RWPE1 (cell line): ENCODE measurements at regions of chr15 and their contacts with region 1.

Region 1: DNA sequence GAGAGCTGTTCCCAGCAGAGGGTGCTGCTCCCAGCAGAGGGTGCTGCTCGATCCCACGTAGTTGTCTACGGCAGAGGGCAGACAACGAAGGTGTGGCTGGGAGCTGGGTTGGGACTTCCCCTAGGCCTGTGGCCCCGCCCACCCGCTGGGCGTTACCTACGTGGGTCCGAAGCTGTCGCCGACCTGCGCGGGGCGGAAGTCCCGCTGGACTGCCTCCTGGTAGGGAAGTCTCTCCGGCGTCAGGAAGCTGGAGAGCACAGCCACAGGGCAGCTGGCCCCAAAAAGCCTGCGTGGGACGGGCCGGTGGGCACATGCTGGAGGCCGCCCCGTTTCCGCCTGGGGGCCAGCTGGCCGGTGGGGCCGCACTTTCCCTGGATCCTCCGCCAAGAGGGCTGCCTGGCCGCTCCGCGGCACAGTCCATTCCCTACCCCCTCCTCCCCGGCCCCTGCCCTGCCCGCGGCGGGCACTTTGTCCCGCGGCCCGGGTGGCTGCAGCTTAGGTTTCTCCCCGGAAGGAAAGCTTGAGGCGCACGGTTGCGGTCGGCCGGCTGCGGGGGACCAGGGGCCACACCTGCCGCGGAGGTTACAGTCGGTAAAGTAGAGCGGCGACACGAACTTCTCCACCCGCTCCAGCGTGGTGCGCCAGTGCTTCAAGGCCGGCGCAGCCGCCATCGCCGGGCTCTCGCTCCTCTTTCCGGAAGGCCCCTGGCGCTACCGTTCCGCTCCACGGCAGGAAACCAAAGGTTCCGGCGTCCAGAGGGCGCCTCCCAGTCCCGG is at the start of gene MAN2C1:
- DNase-seq: peak; percentile 97
- H3K27ac ChIP-seq: peak within 1 kb of the TSS; percentile 98
- CTCF ChIP-seq: peak; percentile 96

Region 2: GRCh38 chr15:75049392-75049791 is 318.7 kb before region 1 on chr15:
- CTCF ChIA-PET with region 1: no interaction called
- POLR2A ChIA-PET with region 1: no interaction called
- DNase-seq: no peak
- H3K27ac ChIP-seq: no peak overlapping the region
- CTCF ChIP-seq: no peak

Region 3: DNA sequence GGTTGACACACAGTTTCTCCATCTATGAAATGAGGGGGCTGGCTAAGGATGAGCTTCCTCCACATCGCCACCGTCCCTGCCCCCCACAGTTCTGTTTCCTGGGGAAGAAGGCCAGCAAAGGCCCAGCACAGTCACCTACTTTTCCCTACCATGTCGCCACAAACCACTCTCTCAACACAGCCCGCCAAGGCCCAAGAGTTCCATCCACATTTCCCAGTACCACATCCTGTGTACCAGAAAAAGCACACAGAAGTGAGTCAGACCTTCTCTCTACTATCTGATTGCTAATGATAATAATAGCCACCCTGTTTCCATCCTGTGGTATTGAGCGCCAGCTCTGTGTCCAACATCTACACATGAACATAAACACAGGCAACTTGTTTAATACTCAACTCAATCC is 196.7 kb before region 1 on chr15:
- CTCF ChIA-PET with region 1: no interaction called
- POLR2A ChIA-PET with region 1: no interaction called
- DNase-seq: no peak
- H3K27ac ChIP-seq: no peak overlapping the region
- CTCF ChIP-seq: no peak

Region 4: DNA sequence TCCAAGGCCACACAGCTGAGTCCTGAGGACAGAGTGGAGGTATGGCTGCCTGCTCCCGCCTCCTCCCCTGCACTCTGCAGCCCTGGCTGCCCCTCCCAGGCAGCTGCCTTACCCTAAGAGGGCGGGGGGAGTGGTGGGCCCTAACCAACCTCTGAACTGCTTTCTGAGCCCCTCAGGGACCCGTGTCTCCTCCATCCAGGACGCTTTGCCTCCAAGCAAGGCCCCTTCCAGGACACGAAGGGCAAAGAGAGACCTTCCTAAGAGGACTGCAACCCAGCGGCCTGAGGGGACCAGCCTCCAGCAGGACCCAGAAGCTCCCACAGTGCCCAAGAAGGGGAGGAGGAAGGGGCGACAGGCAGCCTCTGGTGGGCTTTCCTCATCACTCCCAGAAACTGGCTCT is 13.6 kb before region 1 on chr15:
- CTCF ChIA-PET with region 1: interaction called, 12 read pairs
- POLR2A ChIA-PET with region 1: no interaction called
- DNase-seq: no peak
- H3K27ac ChIP-seq: peak overlapping the region; percentile 28
- CTCF ChIP-seq: no peak

Region 5: DNA sequence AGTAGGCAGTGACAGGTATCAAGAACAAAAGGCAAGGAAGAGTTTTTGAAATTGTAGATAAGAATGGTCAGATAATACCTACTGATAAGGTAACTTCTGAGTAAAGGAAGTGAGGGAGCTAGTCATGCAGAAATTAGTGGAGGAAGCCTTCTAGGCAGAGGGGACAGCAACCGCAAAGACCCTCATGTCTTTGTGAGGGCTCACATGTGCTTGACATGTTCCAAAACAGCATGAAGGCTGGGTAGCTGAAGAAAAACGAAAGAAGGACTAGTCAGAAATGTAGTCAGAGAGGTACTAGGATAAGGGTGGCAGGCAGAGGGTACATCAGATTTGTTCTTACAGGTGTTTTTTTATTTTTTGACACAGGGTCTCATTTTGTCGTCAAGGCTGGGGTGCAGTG is 78.0 kb after region 1 on chr15:
- CTCF ChIA-PET with region 1: no interaction called
- POLR2A ChIA-PET with region 1: interaction called, 10 read pairs
- DNase-seq: no peak
- H3K27ac ChIP-seq: peak overlapping the region; percentile 8; the same call in 1 of the 2 replicates
- CTCF ChIP-seq: no peak

Region 6: GRCh38 chr15:75483961-75484360 is 115.9 kb after region 1 on chr15:
- CTCF ChIA-PET with region 1: no interaction called
- POLR2A ChIA-PET with region 1: no interaction called
- DNase-seq: no peak
- H3K27ac ChIP-seq: no peak overlapping the region
- CTCF ChIP-seq: no peak

Region 7: DNA sequence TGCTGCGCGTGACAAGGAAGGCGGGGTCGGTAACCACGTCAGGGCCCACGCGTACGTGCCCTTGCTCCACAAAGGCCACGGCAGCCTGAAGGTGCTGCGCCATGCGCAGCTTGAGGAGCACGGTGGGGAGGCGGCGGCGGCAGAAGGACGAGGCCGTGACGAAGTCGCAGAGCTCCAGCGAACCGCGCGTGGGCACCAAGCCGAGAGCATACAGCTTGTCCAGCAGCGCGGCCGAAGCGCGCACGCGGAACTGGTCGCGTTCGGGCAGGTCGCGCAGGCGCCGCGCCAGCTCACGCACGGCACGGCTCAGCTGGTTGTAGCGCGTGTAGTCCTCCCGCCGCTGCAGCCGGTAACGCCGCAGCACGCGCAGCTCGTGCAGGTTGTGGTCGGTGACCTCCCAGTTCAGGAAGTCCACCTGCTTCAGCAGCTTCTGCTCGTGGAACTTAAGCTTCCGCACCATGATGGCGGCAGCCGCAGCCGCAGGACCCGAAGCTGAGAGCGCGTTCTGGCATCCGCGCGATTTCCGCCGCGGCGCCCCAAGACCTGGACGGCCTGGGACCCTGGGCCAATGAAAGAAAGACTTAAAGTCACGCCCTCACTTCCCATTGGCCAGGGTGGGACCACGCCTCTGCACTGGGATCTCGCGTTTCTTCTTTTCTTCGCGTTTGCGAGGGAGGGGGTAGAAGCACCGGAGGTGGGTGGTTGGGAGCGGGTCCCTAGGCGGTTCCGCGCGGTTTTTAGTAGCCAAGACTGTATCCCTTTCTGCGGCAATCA is 271.8 kb after region 1 on chr15 and contains the start of gene IMP3:
- CTCF ChIA-PET with region 1: interaction called, 3 read pairs
- POLR2A ChIA-PET with region 1: interaction called, 13 read pairs
- DNase-seq: peak; percentile 99
- H3K27ac ChIP-seq: peak within 1 kb of the TSS; percentile 98
- CTCF ChIP-seq: no peak

Region 8: GRCh38 chr15:75653347-75653913 is 285.3 kb after region 1 on chr15:
- CTCF ChIA-PET with region 1: no interaction called
- POLR2A ChIA-PET with region 1: no interaction called
- DNase-seq: no peak
- H3K27ac ChIP-seq: peak overlapping the region; percentile 98
- CTCF ChIP-seq: no peak